H1 (cell line): ENCODE measurements at regions of chr11 and their contacts with region 1.

Region 1: GRCh38 chr11:130131961-130132850 is 27.4 kb upstream of the ST14 start:
- DNase-seq: peak; percentile 17 to 63
- H3K4me3 ChIP-seq: 0 out of 8 replicates have a peak overlapping the region, but pooled peaks of 1 of the 4 experiments have one; percentile 19
- H3K27ac ChIP-seq: no peak overlapping the region
- H3K4me1 ChIP-seq: no peaks in the 10 kb centered on the region
- H3K27me3 ChIP-seq: no peaks in the 10 kb centered on the region
- CTCF ChIP-seq: peak; percentile 19 to 83 (median 72)
- EP300 ChIP-seq: no peak
- POLR2A ChIP-seq: no peak
- RAD21 ChIP-seq: peak; percentile 91

Region 2: DNA sequence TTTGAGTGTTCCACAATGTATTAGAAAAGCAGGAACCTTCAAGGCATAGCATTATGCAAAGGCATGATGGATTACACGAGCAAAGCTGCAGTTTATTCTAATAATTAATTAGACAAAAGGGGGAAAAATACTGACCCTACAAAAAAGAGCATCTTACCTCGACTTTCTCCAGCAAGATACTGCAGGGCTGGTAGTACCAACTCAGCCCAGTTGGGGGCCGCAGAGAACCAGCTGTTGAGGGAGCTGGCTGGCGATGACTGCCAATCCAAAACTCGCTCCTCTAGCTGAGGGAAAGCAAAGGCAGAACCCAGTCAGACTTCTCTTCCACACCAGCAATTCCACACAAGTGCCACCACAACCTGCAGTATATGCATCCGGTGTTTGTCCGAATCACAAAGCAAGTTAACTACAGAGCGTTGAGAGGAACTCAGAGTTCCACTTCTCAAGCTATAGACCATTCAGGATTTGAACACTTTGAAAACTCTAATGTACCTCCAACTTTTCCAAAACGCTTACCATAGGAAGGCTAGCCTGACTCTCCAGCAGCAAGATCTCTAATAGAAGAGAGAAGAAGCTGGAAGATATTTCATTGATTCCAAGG is 250.5 kb before region 1 on chr11:
- CTCF ChIA-PET with region 1: interaction called, 14 read pairs
- POLR2A ChIA-PET with region 1: no interaction called
- DNase-seq: peak in 1 of 2 experiments; percentile 79
- H3K4me3 ChIP-seq: no peak overlapping the region
- H3K27ac ChIP-seq: no peak overlapping the region
- H3K4me1 ChIP-seq: no peaks in the 10 kb centered on the region
- H3K27me3 ChIP-seq: no peaks in the 10 kb centered on the region
- CTCF ChIP-seq: peak; percentile 53 to 78 (median 64)
- EP300 ChIP-seq: no peak
- POLR2A ChIP-seq: no peak
- RAD21 ChIP-seq: peak; percentile 59 to 69

Region 3: DNA sequence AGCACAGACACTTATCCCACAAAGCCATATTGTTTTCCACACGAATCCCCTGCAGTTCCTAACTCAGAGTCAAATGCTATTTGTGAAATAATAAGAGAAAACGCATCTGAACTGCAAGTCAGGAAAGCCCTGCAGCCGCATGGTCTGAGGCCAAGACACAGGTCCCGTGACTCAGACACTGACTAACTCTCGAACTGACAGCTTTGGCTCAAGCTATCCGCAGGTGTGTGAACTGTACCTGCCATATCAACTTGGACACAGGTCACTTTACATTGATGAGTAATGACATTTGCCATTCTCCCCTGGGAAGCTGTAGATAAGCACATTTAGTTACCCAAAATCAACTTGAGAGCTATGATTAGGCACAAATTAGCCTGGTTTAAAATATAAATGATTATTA is 201.9 kb before region 1 on chr11:
- CTCF ChIA-PET with region 1: interaction called, 40 read pairs
- POLR2A ChIA-PET with region 1: no interaction called
- DNase-seq: no peak
- H3K4me3 ChIP-seq: no peak overlapping the region
- H3K27ac ChIP-seq: no peak overlapping the region
- H3K4me1 ChIP-seq: peaks cover 0 to 4% (median 2%) of the 10 kb centered on the region in 4 experiments; a peak in 4 of 7 replicates
- H3K27me3 ChIP-seq: no peaks in the 10 kb centered on the region
- CTCF ChIP-seq: no peak
- EP300 ChIP-seq: no peak
- POLR2A ChIP-seq: no peak
- RAD21 ChIP-seq: no peak

Region 4: DNA sequence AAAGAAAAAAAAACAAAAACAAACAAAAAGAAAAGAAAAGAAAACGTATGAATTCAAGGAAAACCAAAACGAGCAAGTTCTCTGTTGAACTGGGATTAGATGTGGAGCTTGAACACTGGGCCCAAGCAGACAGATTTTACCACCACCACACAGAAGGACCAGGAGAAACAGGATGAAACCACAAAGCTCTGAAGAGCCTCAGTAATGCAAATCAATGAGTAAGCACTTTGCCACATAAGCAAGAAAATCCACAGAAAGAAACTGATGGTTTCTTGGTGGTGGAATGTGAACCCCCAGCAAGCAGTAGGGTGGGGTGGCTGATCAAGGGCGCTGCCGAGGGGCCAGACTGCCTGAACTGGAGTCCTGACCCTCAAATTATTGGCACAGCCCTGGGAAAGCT is 185.9 kb before region 1 on chr11:
- CTCF ChIA-PET with region 1: interaction called, 12 read pairs
- POLR2A ChIA-PET with region 1: interaction called, 3 read pairs
- DNase-seq: no peak
- H3K4me3 ChIP-seq: no peak overlapping the region
- H3K27ac ChIP-seq: no peak overlapping the region
- H3K4me1 ChIP-seq: no peaks in the 10 kb centered on the region; a peak in 1 of 7 replicates
- H3K27me3 ChIP-seq: no peaks in the 10 kb centered on the region
- CTCF ChIP-seq: no peak
- EP300 ChIP-seq: no peak
- POLR2A ChIP-seq: no peak
- RAD21 ChIP-seq: no peak

Region 5: GRCh38 chr11:130002846-130003716 is 129.1 kb before region 1 on chr11:
- CTCF ChIA-PET with region 1: interaction called, 10 read pairs
- POLR2A ChIA-PET with region 1: interaction called, 9 read pairs
- DNase-seq: peak; percentile 85 to 88
- H3K4me3 ChIP-seq: peak overlapping the region; percentile 62 to 80 (median 77)
- H3K27ac ChIP-seq: peak overlapping the region; percentile 99
- H3K4me1 ChIP-seq: peaks cover 0 to 2% (median 0%) of the 10 kb centered on the region in 4 experiments; a peak in 3 of 7 replicates
- H3K27me3 ChIP-seq: no peaks in the 10 kb centered on the region
- CTCF ChIP-seq: no peak
- EP300 ChIP-seq: no peak
- POLR2A ChIP-seq: peak in 1 of 2 experiments; percentile 68; a peak in 2 of 3 replicates
- RAD21 ChIP-seq: no peak; a peak in 1 of 4 replicates

Region 6: DNA sequence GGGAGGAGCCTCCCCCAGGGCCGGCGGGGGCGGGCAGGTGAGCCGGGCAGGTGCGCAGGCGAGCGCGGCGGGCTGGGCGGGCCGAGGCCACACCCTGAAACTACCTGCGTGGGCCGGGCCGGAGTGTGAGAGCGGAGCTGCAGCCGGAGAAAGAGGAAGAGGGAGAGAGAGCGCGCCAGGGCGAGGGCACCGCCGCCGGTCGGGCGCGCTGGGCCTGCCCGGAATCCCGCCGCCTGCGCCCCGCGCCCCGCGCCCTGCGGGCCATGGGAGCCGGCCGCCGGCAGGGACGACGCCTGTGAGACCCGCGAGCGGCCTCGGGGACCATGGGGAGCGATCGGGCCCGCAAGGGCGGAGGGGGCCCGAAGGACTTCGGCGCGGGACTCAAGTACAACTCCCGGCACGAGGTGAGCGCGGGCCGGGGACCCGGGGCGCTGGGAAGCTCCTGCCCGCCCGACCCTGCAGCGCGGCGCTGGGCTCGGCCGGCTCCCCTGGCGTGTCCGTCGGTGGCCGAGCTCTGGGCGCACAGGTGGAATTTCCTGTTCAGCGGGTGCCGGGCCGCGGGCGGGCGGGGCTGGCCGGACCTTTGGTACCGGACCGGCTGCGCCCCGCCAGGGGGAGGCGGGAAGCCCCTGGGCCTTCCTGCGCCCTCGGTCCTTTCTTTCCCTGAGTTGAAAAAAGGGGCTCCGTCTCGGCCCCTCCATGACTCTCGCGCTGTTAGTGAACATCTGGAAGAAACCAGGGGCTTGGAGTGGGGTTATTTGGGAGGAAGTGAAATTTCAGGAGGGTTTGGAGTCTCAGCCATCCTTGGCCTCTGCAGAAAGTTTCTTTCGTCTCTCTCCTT is 27.7 kb after region 1 on chr11 and contains the start of gene ST14:
- CTCF ChIA-PET with region 1: interaction called, 15 read pairs
- POLR2A ChIA-PET with region 1: no interaction called
- DNase-seq: peak in 1 of 2 experiments; percentile 72
- H3K4me3 ChIP-seq: peak within 1 kb of the TSS; percentile 37 to 61 (median 44)
- H3K27ac ChIP-seq: no peak within 1 kb of the TSS
- H3K4me1 ChIP-seq: peaks cover 0 to 25% (median 11%) of the 10 kb centered on the region in 4 experiments; a peak in 6 of 7 replicates
- H3K27me3 ChIP-seq: peaks cover 4 to 51% (median 43%) of the 10 kb centered on the region in 4 experiments
- CTCF ChIP-seq: no peak
- EP300 ChIP-seq: no peak
- POLR2A ChIP-seq: no peak
- RAD21 ChIP-seq: no peak
- total RNA-seq, gene ST14: 22.4 and 25.7 TPM in 2 replicates

Region 7: GRCh38 chr11:130340671-130341319 is 208.6 kb after region 1 on chr11:
- CTCF ChIA-PET with region 1: no interaction called
- POLR2A ChIA-PET with region 1: no interaction called
- DNase-seq: no peak
- H3K4me3 ChIP-seq: no peak overlapping the region
- H3K27ac ChIP-seq: no peak overlapping the region
- H3K4me1 ChIP-seq: no peaks in the 10 kb centered on the region
- H3K27me3 ChIP-seq: no peaks in the 10 kb centered on the region
- CTCF ChIP-seq: no peak
- EP300 ChIP-seq: no peak
- POLR2A ChIP-seq: no peak
- RAD21 ChIP-seq: no peak

Region 8: DNA sequence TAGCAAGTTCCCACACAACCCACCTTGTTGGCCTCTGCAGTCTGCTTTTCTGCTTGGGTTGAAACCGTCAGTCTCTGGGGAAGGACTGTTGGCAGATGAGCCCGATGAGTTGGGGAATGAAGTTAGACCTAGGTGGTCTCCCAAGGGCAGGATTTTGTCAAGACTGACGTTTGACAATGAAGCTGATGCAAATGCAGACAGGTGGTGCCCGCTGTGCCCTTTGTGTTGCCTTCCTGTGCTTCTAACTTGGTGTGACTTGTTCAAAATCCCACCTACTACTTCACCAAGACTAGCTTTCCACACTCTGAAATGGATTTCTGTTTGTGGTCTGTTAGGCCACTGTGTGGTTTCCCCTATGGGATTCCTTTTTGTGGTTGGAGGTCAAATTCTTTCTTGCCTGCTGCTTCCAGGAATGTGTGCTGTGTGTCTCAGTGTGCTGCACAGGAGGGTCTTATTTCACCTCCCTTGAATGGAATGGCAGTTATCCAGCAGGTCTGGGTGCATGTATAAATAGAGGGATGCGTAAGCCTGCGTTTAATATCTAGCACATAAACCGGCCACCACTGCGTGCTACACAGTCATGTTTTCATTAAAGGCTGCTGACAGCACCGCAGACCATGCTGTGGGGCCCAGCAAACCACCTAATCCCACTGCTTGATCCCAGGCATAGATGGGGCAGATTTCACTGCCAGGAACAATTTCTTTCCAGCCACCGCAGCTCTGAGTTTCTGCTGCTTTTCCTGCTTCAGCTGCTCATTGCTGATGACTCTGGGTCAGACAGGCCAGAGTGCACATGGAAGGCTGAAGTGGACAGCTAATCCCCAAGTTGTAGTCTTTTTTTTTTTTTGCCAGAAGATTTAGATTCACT is 251.4 kb after region 1 on chr11:
- CTCF ChIA-PET with region 1: no interaction called
- POLR2A ChIA-PET with region 1: no interaction called
- DNase-seq: peak; percentile 33 to 66
- H3K4me3 ChIP-seq: no peak overlapping the region
- H3K27ac ChIP-seq: peak overlapping the region; percentile 57; the same call in 1 of the 2 replicates
- H3K4me1 ChIP-seq: peaks cover 10 to 23% (median 14%) of the 10 kb centered on the region in 4 experiments
- H3K27me3 ChIP-seq: no peaks in the 10 kb centered on the region
- CTCF ChIP-seq: no peak
- EP300 ChIP-seq: no peak
- POLR2A ChIP-seq: peak; percentile 47 to 85
- RAD21 ChIP-seq: no peak; a peak in 1 of 4 replicates

Region 9: DNA sequence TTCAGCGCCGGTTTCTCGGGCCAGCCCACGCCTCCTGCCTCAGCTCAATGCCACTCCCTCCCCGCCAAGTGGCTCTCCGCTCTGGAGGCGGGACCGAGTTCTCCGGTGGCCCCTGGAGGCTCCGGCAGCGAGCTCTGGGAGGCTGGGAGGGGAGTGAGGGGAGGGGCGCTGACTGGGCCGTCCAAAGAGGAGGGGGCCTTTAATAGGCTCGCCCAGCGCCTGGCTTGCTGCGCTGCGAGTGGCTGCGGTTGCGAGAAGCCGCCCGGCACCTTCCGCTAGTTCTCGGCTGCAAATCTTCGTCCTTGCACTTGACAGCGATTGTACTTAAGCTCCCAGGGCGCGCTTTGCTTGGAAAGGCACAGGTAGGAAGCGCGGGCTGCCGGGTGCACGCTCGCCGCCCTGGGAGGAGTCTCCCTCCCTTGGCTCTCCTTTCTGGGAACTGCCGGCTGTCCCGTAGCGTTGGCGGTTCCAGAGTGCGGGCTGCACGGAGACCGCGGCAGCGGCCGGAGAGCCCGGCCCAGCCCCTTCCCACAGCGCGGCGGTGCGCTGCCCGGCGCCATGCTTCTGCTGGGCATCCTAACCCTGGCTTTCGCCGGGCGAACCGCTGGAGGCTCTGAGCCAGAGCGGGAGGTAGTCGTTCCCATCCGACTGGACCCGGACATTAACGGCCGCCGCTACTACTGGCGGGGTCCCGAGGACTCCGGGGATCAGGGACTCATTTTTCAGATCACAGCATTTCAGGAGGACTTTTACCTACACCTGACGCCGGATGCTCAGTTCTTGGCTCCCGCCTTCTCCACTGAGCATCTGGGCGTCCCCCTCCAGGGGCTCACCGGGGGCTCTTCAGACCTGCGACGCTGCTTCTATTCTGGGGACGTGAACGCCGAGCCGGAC is 316.5 kb after region 1 on chr11 and contains the start of gene ADAMTS15:
- CTCF ChIA-PET with region 1: no interaction called
- POLR2A ChIA-PET with region 1: no interaction called
- DNase-seq: peak; percentile 80 to 87
- H3K4me3 ChIP-seq: peak within 1 kb of the TSS; percentile 49 to 72 (median 54)
- H3K27ac ChIP-seq: no peak within 1 kb of the TSS
- H3K4me1 ChIP-seq: peaks cover 0 to 9% (median 6%) of the 10 kb centered on the region in 4 experiments; a peak in 6 of 7 replicates
- H3K27me3 ChIP-seq: peaks cover 9 to 63% (median 44%) of the 10 kb centered on the region in 4 experiments
- CTCF ChIP-seq: no peak; a peak in 1 of 4 replicates
- EP300 ChIP-seq: no peak
- POLR2A ChIP-seq: peak in 1 of 2 experiments; percentile 34; a peak in 1 of 3 replicates
- RAD21 ChIP-seq: no peak
- total RNA-seq, gene ADAMTS15: 4.7 and 4.9 TPM in 2 replicates

Region 10: GRCh38 chr11:130585545-130585944 is 453.3 kb after region 1 on chr11:
- CTCF ChIA-PET with region 1: no interaction called
- POLR2A ChIA-PET with region 1: no interaction called
- DNase-seq: no peak
- H3K4me3 ChIP-seq: no peak overlapping the region
- H3K27ac ChIP-seq: no peak overlapping the region
- H3K4me1 ChIP-seq: peaks cover 0 to 5% (median 3%) of the 10 kb centered on the region in 4 experiments; a peak in 3 of 7 replicates
- H3K27me3 ChIP-seq: no peaks in the 10 kb centered on the region
- CTCF ChIP-seq: no peak
- EP300 ChIP-seq: no peak
- POLR2A ChIP-seq: no peak
- RAD21 ChIP-seq: no peak